Posterior vena cava (tissue), 2 donors: ENCODE measurements at regions of chr4 and their contacts with region 1.

Region 1: DNA sequence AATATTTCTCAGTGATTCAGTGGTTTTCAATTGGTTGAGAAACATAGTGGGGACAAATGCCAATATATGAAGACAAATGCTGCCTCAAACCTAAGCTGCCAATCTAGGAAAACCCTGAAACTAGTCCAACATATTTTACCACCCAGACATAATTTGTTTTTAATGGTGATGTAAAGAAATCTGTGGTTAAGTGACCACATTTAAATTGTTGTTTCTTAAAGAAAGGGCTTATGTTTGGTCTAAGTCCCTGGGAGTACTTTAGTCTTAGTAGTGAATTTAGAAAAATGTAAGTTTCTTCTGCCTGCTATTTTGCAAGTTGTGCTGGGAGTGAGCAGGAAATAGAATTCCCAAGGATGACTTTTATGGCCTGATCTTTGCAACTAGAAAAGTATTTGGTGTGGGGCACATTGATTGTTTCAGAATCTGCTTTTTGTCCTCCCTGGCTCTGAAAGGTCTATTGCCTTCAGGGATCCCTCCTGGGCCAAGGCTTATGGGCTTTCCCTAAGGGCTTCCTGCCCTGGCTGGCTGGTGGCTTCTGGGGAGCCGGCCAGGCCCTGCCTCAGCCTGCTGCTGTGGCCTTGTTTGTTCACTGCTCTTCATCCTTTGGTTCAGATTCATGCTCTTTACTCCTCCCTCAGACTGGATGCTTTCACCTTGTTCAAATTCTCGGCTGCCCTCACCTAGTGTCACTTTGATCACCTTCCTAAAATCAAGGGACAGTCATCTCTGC is 169.8 kb upstream of the JADE1 start:
- DNase-seq: no peak

Region 2: GRCh38 chr4:128653517-128654444 is 14.1 kb after region 1 on chr4:
- intact Hi-C with region 1: loop called in 1 of 2 experiments (anchors 2 kb)
- DNase-seq: no peak